ENCODE measurements at regions of chr18 and their contacts with region 1.

Region 1: DNA sequence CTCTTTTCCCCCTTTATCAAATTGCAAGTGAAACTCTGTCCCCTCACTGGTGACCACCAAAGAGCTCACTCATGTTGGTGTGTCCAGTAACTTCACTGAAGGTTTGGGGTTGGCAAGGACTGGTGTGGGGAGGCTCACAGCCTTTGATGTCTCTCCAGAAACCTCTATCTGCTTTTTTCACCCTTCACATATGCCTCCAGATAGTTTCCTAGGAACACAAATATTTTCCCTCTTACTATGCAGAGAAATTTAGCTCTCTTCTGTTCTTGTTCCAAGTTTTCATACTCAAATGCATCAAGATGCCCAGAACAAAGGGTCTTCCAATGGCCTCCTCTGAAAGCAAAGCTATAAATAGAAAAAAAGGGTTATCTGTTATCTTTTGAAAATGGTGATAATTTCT is 20.7 kb downstream of the DTNA start:
- DNase-seq: no peak
- ATAC-seq: no peak
- H3K4me3 ChIP-seq: no peak overlapping the region
- H3K4me3 Mint-ChIP-seq: no peak overlapping the region
- H3K27ac ChIP-seq: no peak overlapping the region
- H3K27ac Mint-ChIP-seq: no peak overlapping the region
- H3K4me1 ChIP-seq: no peaks in the 10 kb centered on the region
- H3K4me1 Mint-ChIP-seq: peaks cover 0 to 5% (median 4%) of the 10 kb centered on the region in 3 donors
- H3K27me3 ChIP-seq: peaks cover 0 to 6% of the 10 kb centered on the region in 2 experiments
- H3K27me3 Mint-ChIP-seq: peaks cover 0 to 6% of the 10 kb centered on the region in 2 donors

Region 2: GRCh38 chr18:36402765-36403396 is 1672.1 kb after region 1 on chr18:
- CTCF ChIA-PET with region 1: no interaction called
- POLR2A ChIA-PET with region 1: interaction called in 1 of 2 experiments, 12 read pairs
- DNase-seq: no peak
- ATAC-seq: no peak
- H3K4me3 ChIP-seq: no peak overlapping the region
- H3K4me3 Mint-ChIP-seq: no peak overlapping the region
- H3K27ac ChIP-seq: no peak overlapping the region
- H3K27ac Mint-ChIP-seq: no peak overlapping the region
- H3K4me1 ChIP-seq: no peaks in the 10 kb centered on the region
- H3K4me1 Mint-ChIP-seq: no peaks in the 10 kb centered on the region
- H3K27me3 ChIP-seq: peaks cover 0 to 6% of the 10 kb centered on the region in 2 experiments
- H3K27me3 Mint-ChIP-seq: peaks cover 9 to 20% of the 10 kb centered on the region in 2 donors

Measured in T-cell (primary cell).